ENCODE measurements at regions of chr7 and their contacts with region 1.

Region 1: GRCh38 chr7:7719236-7719635 is 829 bp upstream of the RPA3 start:
- DNase-seq: peak; percentile 77
- ATAC-seq: peak; percentile 97
- H3K4me3 ChIP-seq: 0 out of 2 replicates have a peak overlapping the region, but pooled peaks have one; percentile 13
- H3K27ac ChIP-seq: no peak overlapping the region
- H3K4me1 ChIP-seq: peaks cover 16% of the 10 kb centered on the region
- H3K27me3 ChIP-seq: no peaks in the 10 kb centered on the region
- CTCF ChIP-seq: no peak

Region 2: GRCh38 chr7:7595451-7595850 is 123.8 kb before region 1 on chr7:
- CTCF ChIA-PET with region 1: no interaction called
- POLR2A ChIA-PET with region 1: no interaction called
- intact Hi-C with region 1: no loop called
- DNase-seq: peak; percentile 62
- ATAC-seq: peak; percentile 61
- H3K4me3 ChIP-seq: no peak overlapping the region
- H3K27ac ChIP-seq: no peak overlapping the region
- H3K4me1 ChIP-seq: no peaks in the 10 kb centered on the region
- H3K27me3 ChIP-seq: no peaks in the 10 kb centered on the region
- CTCF ChIP-seq: peak; percentile 63

Region 3: DNA sequence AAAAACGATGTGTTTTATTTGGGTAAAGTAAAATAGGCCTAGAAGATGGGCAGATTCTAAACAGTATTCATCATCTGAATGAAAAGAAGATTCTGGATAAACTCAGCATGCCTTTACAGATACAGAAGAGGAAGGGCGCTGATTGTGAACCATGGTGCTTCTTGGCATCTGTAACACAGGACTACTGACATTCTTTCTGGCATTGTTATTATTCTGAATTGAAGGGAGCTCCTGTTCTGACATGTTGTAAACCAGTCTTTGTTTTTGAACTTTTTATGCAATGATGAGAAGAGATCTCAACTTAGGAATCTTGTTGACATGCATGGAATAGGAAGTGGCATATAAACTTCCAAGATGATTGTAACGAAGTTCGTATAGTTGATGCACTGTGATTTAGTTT is 14.4 kb before region 1 on chr7:
- CTCF ChIA-PET with region 1: no interaction called
- POLR2A ChIA-PET with region 1: no interaction called
- intact Hi-C with region 1: loop called (anchors 2 kb)
- DNase-seq: no peak
- ATAC-seq: no peak
- H3K4me3 ChIP-seq: no peak overlapping the region
- H3K27ac ChIP-seq: no peak overlapping the region
- H3K4me1 ChIP-seq: 0 out of 2 replicates have a peak, but pooled peaks cover 1% of the 10 kb centered on the region
- H3K27me3 ChIP-seq: no peaks in the 10 kb centered on the region
- CTCF ChIP-seq: no peak